ENCODE measurements at regions of chr20 and their contacts with region 1.

Region 1: GRCh38 chr20:21719592-21720214 is 14.2 kb downstream of the PAX1 start:
- DNase-seq: peak in 5 of 10 donors; percentile 23 to 85 (median 62)
- H3K4me3 ChIP-seq: no peak overlapping the region
- H3K27ac ChIP-seq: no peak overlapping the region
- H3K27me3 ChIP-seq: peaks cover 0 to 55% (median 32%) of the 10 kb centered on the region in 45 donors
- CTCF ChIP-seq: peak; percentile 67 to 95 (median 81)

Region 2: GRCh38 chr20:22106308-22106938 is 386.7 kb after region 1 on chr20:
- intact Hi-C with region 1: loop called (anchors 5 to 10 kb)
- DNase-seq: no peak
- H3K4me3 ChIP-seq: no peak overlapping the region
- H3K27ac ChIP-seq: no peak overlapping the region
- H3K27me3 ChIP-seq: peaks cover 0 to 32% (median 4%) of the 10 kb centered on the region in 45 donors
- CTCF ChIP-seq: peak in 55 of 56 donors; percentile 19 to 70 (median 50)

Region 3: GRCh38 chr20:22248051-22248667 is 528.5 kb after region 1 on chr20:
- intact Hi-C with region 1: loop called in 1 of 2 experiments (anchors 5 kb)
- DNase-seq: no peak
- H3K4me3 ChIP-seq: no peak overlapping the region
- H3K27ac ChIP-seq: no peak overlapping the region
- H3K27me3 ChIP-seq: peaks cover 0 to 37% (median 9%) of the 10 kb centered on the region in 45 donors
- CTCF ChIP-seq: peak in 53 of 56 donors; percentile 3 to 63 (median 42)

Region 4: DNA sequence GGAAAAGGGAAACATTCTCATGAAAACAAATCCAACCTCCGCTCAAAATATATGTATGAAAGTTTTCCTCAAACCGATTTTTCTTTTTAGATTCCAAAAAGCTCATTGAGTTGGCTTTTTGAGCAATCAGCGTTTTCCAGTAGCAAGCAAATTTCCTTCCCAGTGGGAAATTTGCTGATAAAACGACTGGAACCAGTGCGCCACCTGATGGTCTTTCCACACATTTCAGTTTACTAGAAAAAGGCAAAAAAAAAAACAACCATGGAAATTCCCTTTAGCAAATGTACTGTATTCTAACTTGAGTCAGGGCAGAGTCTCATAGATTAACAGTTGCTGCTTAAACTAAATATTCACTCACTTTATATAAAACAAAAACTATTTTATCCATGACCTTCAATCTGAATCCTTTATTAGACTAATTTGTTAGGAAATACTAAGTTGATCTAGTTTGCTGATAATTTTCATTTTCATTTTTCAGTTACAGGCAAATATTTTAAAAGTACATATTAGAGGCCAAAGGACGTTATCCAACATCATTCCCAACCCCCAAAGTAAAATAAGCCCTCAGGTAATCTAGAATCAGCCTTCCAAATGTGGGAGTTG is 593.1 kb after region 1 on chr20:
- intact Hi-C with region 1: loop called in 1 of 2 experiments (anchors 10 kb)
- DNase-seq: peak in 3 of 10 donors; percentile 6 to 37 (median 7)
- H3K4me3 ChIP-seq: no peak overlapping the region
- H3K27ac ChIP-seq: no peak overlapping the region
- H3K27me3 ChIP-seq: peaks cover 0 to 33% (median 5%) of the 10 kb centered on the region in 45 donors
- CTCF ChIP-seq: peak; percentile 55 to 82 (median 72)